Psoas muscle (tissue), 8 donors: ENCODE measurements at regions of chr13 and their contacts with region 1.

Region 1: DNA sequence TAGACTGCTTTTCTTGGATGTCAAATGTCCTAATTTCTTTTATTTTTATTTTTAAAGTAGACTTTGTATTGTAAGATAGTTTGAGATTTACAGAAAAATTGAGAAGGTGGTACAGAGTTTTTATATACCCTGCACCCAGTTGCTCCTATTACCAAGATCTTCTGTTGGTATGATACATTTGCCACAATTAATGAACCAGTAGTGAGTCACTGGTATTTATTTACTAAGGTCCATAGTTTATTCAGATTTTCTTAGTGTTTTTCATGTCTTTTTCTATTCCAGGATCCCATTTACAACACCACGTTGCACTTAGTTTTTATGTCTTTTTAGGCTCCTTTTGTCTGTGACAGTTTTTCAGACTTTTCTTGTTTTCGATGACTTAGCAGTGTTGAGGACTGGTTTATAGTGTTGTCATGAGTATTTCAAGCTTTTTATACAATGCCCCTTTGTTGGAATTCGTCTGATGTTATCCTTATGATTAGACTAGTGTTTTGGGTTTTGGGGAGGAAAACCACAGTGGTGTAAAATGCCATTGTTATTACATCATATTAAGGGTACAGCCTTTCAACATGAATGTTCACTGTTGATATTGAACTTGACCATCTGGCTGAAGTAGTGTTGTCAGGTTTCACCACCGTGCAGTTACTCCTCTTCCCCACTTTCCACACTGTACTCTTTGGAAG is 35.9 kb downstream of the COG3 start:
- DNase-seq: no peak
- ATAC-seq: peak in 1 of 4 donors; percentile 49
- H3K4me3 ChIP-seq: no peak overlapping the region
- H3K27ac ChIP-seq: no peak overlapping the region
- H3K4me1 ChIP-seq: no peaks in the 10 kb centered on the region
- H3K27me3 ChIP-seq: no peaks in the 10 kb centered on the region
- CTCF ChIP-seq: no peak

Region 2: GRCh38 chr13:46149272-46150133 is 648.9 kb after region 1 on chr13:
- intact Hi-C with region 1: loop called in 1 of 2 experiments (anchors 10 kb)
- DNase-seq: no peak
- ATAC-seq: no peak
- H3K4me3 ChIP-seq: no peak overlapping the region
- H3K27ac ChIP-seq: no peak overlapping the region
- H3K4me1 ChIP-seq: no peaks in the 10 kb centered on the region
- H3K27me3 ChIP-seq: peaks cover 0 to 5% (median 0%) of the 10 kb centered on the region in 3 donors
- CTCF ChIP-seq: no peak